Activated B cell treated with CpG ODN at 0.5 μM for 24 hours (primary cell): ENCODE measurements at regions of chr3 and their contacts with region 1.

Region 1: DNA sequence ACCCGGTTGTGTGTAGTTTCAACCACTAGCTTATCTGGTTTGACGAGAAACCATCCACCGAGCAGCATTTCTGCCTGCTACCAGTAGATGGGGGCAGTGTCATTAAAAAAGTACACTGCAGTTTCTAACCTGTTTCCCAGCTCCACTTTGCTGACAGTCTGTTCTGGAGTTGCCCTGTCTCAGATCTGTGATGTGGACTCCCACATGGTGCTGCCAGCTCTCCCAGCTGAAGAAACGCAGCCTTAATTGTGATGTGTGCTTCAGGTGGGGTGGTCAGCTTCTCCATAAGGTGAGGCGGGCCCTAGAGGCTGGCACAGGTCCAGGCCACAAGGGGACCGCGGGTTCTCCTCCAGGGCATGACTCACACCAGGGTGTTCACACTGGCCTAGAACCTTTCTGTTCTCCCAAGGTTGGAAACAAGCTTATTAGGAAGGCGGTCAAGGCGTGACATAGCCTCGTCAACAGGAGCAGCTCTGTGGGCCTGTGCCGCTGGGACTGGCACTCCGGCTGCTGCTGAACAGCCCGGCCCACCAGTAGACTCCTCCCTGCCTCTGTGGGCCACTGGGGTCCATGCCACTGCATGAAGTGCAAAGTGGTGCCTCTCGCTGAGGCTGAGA is 2.9 kb upstream of the FAM43A start:
- DNase-seq: peak; percentile 43
- ATAC-seq: peak; percentile 62
- H3K4me3 Mint-ChIP-seq: no peak overlapping the region
- H3K27ac Mint-ChIP-seq: peak overlapping the region; percentile 50
- H3K4me1 Mint-ChIP-seq: peaks cover 38% of the 10 kb centered on the region
- H3K27me3 Mint-ChIP-seq: no peaks in the 10 kb centered on the region
- CTCF ChIP-seq: peak; percentile 55

Region 2: GRCh38 chr3:194381460-194381875 is 301.3 kb before region 1 on chr3:
- CTCF ChIA-PET with region 1: no interaction called
- POLR2A ChIA-PET with region 1: no interaction called
- intact Hi-C with region 1: no loop called
- DNase-seq: no peak
- ATAC-seq: no peak
- H3K4me3 Mint-ChIP-seq: no peak overlapping the region
- H3K27ac Mint-ChIP-seq: no peak overlapping the region
- H3K4me1 Mint-ChIP-seq: no peaks in the 10 kb centered on the region
- H3K27me3 Mint-ChIP-seq: peaks cover 33% of the 10 kb centered on the region
- CTCF ChIP-seq: no peak

Region 3: GRCh38 chr3:194604834-194605233 is 78.0 kb before region 1 on chr3:
- CTCF ChIA-PET with region 1: no interaction called
- POLR2A ChIA-PET with region 1: no interaction called
- intact Hi-C with region 1: no loop called
- DNase-seq: no peak
- ATAC-seq: no peak
- H3K4me3 Mint-ChIP-seq: no peak overlapping the region
- H3K27ac Mint-ChIP-seq: no peak overlapping the region
- H3K4me1 Mint-ChIP-seq: no peaks in the 10 kb centered on the region
- H3K27me3 Mint-ChIP-seq: no peaks in the 10 kb centered on the region
- CTCF ChIP-seq: no peak

Region 4: GRCh38 chr3:194769020-194769643 is 86.3 kb after region 1 on chr3:
- CTCF ChIA-PET with region 1: interaction called, 6 read pairs
- POLR2A ChIA-PET with region 1: interaction called, 61 read pairs
- intact Hi-C with region 1: loop called (anchors 1 kb)
- DNase-seq: peak; percentile 69
- ATAC-seq: peak; percentile 98
- H3K4me3 Mint-ChIP-seq: peak overlapping the region; percentile 86
- H3K27ac Mint-ChIP-seq: peak overlapping the region; percentile 94
- H3K4me1 Mint-ChIP-seq: peaks cover 34% of the 10 kb centered on the region
- H3K27me3 Mint-ChIP-seq: peaks cover 5% of the 10 kb centered on the region
- CTCF ChIP-seq: no peak

Region 5: GRCh38 chr3:195094171-195094921 is 411.5 kb after region 1 on chr3:
- CTCF ChIA-PET with region 1: interaction called, 17 read pairs
- POLR2A ChIA-PET with region 1: interaction called, 25 read pairs
- intact Hi-C with region 1: loop called (anchors 2 kb)
- DNase-seq: peak; percentile 61
- ATAC-seq: peak; percentile 86
- H3K4me3 Mint-ChIP-seq: peak overlapping the region; percentile 80
- H3K27ac Mint-ChIP-seq: peak overlapping the region; percentile 89
- H3K4me1 Mint-ChIP-seq: peaks cover 57% of the 10 kb centered on the region
- H3K27me3 Mint-ChIP-seq: no peaks in the 10 kb centered on the region
- CTCF ChIP-seq: no peak

Region 6: DNA sequence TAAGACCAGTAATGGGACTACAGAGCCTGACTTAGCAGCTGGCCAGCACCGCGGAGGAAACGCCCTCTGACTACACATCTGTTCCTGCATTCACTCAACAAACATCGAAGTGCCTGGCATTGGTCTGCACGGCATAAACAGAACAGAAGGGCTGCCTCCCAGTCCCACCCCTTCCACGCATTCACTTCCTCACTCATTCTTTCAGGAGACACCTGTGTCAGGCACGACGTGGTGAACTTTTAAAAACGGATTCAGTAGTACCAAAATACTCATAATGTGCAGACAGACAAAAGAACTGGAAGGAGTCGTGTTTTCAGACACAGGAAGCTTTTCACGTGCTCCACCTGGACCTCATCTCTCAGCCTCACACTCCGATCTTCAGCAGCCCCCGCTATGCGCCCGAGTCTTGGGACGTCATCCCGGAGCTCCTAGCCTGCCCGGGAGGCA is 464.9 kb after region 1 on chr3:
- CTCF ChIA-PET with region 1: interaction called, 5 read pairs
- POLR2A ChIA-PET with region 1: interaction called, 16 read pairs
- intact Hi-C with region 1: no loop called
- DNase-seq: peak; percentile 34
- ATAC-seq: peak; percentile 72
- H3K4me3 Mint-ChIP-seq: peak overlapping the region; percentile 85
- H3K27ac Mint-ChIP-seq: peak overlapping the region; percentile 84
- H3K4me1 Mint-ChIP-seq: peaks cover 75% of the 10 kb centered on the region
- H3K27me3 Mint-ChIP-seq: no peaks in the 10 kb centered on the region
- CTCF ChIP-seq: no peak

Region 7: GRCh38 chr3:195214403-195214802 is 531.6 kb after region 1 on chr3:
- CTCF ChIA-PET with region 1: no interaction called
- POLR2A ChIA-PET with region 1: no interaction called
- intact Hi-C with region 1: no loop called
- DNase-seq: no peak
- ATAC-seq: no peak
- H3K4me3 Mint-ChIP-seq: no peak overlapping the region
- H3K27ac Mint-ChIP-seq: no peak overlapping the region
- H3K4me1 Mint-ChIP-seq: peaks cover 6% of the 10 kb centered on the region
- H3K27me3 Mint-ChIP-seq: no peaks in the 10 kb centered on the region
- CTCF ChIP-seq: no peak

Region 8: GRCh38 chr3:195271116-195271858 is 588.5 kb after region 1 on chr3 and contains the start of gene XXYLT1:
- CTCF ChIA-PET with region 1: interaction called, 27 read pairs
- POLR2A ChIA-PET with region 1: interaction called, 24 read pairs
- intact Hi-C with region 1: loop called (anchors 1 kb)
- DNase-seq: peak; percentile 84
- ATAC-seq: peak; percentile 87
- H3K4me3 Mint-ChIP-seq: peak within 1 kb of the TSS; percentile 87
- H3K27ac Mint-ChIP-seq: peak within 1 kb of the TSS; percentile 82
- H3K4me1 Mint-ChIP-seq: peaks cover 20% of the 10 kb centered on the region
- H3K27me3 Mint-ChIP-seq: no peaks in the 10 kb centered on the region
- CTCF ChIP-seq: peak; percentile 77
- total RNA-seq, gene XXYLT1: 7.6 and 7.9 TPM in 2 replicates

Region 9: GRCh38 chr3:195909644-195910508 is 1227.1 kb after region 1 on chr3:
- CTCF ChIA-PET with region 1: no interaction called
- POLR2A ChIA-PET with region 1: interaction called, 3 read pairs
- intact Hi-C with region 1: loop called (anchors 5 kb)
- DNase-seq: peak; percentile 88
- ATAC-seq: peak; percentile 65
- H3K4me3 Mint-ChIP-seq: peak overlapping the region; percentile 78
- H3K27ac Mint-ChIP-seq: peak overlapping the region; percentile 78
- H3K4me1 Mint-ChIP-seq: peaks cover 44% of the 10 kb centered on the region
- H3K27me3 Mint-ChIP-seq: no peaks in the 10 kb centered on the region
- CTCF ChIP-seq: no peak